ENCODE measurements at regions of chr7 and their contacts with region 1.

Region 1: GRCh38 chr7:129644634-129645230 is 33.2 kb downstream of the NRF1 start:
- DNase-seq: peak; percentile 67
- ATAC-seq: no peak; the same call in 1 of the 2 replicates
- H3K4me3 ChIP-seq: no peak overlapping the region
- H3K27ac ChIP-seq: no peak overlapping the region
- H3K4me1 ChIP-seq: peaks cover 38% of the 10 kb centered on the region
- H3K27me3 ChIP-seq: no peaks in the 10 kb centered on the region
- CTCF ChIP-seq: peak; percentile 70

Region 2: GRCh38 chr7:129343099-129343700 is 301.5 kb before region 1 on chr7:
- CTCF ChIA-PET with region 1: interaction called, 4 read pairs
- POLR2A ChIA-PET with region 1: no interaction called
- intact Hi-C with region 1: loop called (anchors 2 kb)
- DNase-seq: peak; percentile 68
- ATAC-seq: peak; percentile 85
- H3K4me3 ChIP-seq: no peak overlapping the region
- H3K27ac ChIP-seq: no peak overlapping the region
- H3K4me1 ChIP-seq: no peaks in the 10 kb centered on the region; the same call in none of the 2 replicates
- H3K27me3 ChIP-seq: no peaks in the 10 kb centered on the region
- CTCF ChIP-seq: peak; percentile 86

Region 3: GRCh38 chr7:129468087-129468486 is 176.6 kb before region 1 on chr7:
- CTCF ChIA-PET with region 1: interaction called, 3 read pairs
- POLR2A ChIA-PET with region 1: no interaction called
- intact Hi-C with region 1: loop called (anchors 1 kb)
- DNase-seq: no peak
- ATAC-seq: no peak
- H3K4me3 ChIP-seq: no peak overlapping the region
- H3K27ac ChIP-seq: no peak overlapping the region
- H3K4me1 ChIP-seq: peaks cover 23% of the 10 kb centered on the region
- H3K27me3 ChIP-seq: no peaks in the 10 kb centered on the region
- CTCF ChIP-seq: no peak

Region 4: DNA sequence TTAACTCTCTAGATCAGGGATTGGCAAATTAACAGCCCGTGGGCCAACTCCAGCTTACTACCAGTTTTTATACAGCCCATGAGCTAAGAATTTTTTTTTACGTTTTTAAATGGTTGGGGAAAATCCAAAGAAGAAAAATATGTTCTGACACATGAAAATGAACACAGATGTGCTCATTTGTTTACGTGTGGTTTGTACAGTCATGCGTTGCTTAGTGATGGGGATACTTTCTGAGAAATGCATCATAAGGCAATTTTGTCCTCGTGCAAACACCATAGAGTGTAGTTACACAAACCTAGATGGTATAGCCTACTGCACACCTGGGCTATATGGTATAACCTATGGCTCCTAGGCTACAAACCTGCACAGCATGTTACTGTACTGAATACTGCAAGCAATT is 150.7 kb before region 1 on chr7:
- CTCF ChIA-PET with region 1: interaction called, 7 read pairs
- POLR2A ChIA-PET with region 1: no interaction called
- intact Hi-C with region 1: loop called (anchors 5 kb)
- DNase-seq: peak; percentile 78
- ATAC-seq: peak; percentile 96
- H3K4me3 ChIP-seq: no peak overlapping the region
- H3K27ac ChIP-seq: peak overlapping the region; percentile 46
- H3K4me1 ChIP-seq: peaks cover 16% of the 10 kb centered on the region
- H3K27me3 ChIP-seq: no peaks in the 10 kb centered on the region
- CTCF ChIP-seq: no peak

Region 5: GRCh38 chr7:129576138-129576537 is 68.6 kb before region 1 on chr7:
- CTCF ChIA-PET with region 1: no interaction called
- POLR2A ChIA-PET with region 1: no interaction called
- intact Hi-C with region 1: loop called (anchors 5 kb)
- DNase-seq: no peak
- ATAC-seq: no peak
- H3K4me3 ChIP-seq: no peak overlapping the region
- H3K27ac ChIP-seq: no peak overlapping the region
- H3K4me1 ChIP-seq: peaks cover 8% of the 10 kb centered on the region
- H3K27me3 ChIP-seq: no peaks in the 10 kb centered on the region
- CTCF ChIP-seq: no peak

Region 6: DNA sequence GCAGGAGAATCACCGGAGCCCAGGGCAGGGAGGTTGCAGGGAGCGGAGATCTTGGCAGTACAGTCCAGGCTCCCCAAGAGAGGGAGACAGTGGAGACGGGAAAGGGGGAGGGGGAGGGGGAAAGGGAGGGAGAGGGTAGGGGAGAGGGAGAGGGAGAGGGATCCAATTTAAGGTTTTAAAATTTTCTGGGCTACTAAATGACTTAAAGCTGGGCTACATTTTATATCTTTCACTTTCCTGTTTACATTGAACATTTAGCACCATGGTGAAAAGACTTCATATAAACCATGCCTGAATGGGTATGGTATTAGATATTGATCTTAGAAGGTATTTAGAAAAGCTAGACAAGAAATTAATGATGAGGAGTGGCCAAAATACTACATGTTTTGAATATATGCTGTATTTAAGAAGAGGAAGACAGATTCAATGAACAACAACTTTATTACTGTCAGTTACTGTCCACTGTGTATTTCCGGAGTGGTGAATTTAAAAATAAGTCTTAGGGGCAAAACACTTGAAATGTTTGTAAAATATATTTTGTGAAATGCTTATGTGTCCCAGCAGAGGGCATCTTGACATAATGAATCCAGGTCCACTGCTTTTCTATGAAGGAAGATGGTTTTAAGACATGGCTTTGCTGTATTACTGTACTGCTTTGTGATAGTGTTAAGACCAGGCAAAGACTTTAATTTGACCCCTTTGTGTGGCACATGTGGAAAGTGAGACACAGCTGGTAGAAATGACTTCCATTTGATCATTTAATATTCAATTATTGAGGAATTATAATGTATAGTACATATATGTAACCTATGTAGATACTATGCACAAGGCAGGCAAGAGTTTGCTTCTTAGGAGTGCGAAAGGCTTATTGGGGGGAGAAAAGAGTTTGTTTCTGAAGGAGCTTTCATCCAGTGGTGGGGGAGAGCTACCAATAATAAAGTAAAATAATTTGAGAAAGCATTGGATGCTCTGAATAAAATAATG is 19.6 kb after region 1 on chr7:
- CTCF ChIA-PET with region 1: no interaction called
- POLR2A ChIA-PET with region 1: no interaction called
- intact Hi-C with region 1: no loop called
- DNase-seq: peak; percentile 68
- ATAC-seq: peak; percentile 76
- H3K4me3 ChIP-seq: no peak overlapping the region
- H3K27ac ChIP-seq: peak overlapping the region; percentile 68
- H3K4me1 ChIP-seq: peaks cover 30% of the 10 kb centered on the region
- H3K27me3 ChIP-seq: no peaks in the 10 kb centered on the region
- CTCF ChIP-seq: peak; percentile 77

Region 7: GRCh38 chr7:129739427-129739826 is 94.7 kb after region 1 on chr7:
- CTCF ChIA-PET with region 1: no interaction called
- POLR2A ChIA-PET with region 1: no interaction called
- intact Hi-C with region 1: no loop called
- DNase-seq: peak; percentile 84
- ATAC-seq: peak; percentile 91
- H3K4me3 ChIP-seq: no peak overlapping the region
- H3K27ac ChIP-seq: peak overlapping the region; percentile 70
- H3K4me1 ChIP-seq: peaks cover 27% of the 10 kb centered on the region
- H3K27me3 ChIP-seq: no peaks in the 10 kb centered on the region
- CTCF ChIP-seq: no peak

Measured in PC-3 (cell line).